ENCODE measurements at regions of chr6 and their contacts with region 1.

Region 1: DNA sequence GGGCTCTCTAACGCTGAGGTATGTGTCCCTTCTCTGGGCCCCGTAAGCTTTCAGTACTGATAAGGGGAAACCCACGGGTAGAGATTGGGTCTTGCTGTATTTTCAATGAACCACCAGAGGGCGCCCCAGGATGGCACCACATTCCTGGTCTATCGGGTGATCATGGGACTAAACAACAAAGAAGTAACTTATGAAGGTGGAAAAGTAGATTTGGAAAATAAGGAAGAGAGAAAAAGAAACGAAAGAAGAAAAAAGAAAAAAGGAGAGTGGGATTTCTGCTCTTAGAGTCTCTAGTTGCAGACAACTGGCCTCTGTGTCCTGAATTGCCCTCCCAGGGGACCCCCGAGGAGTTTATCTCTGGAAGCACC is 93.8 kb downstream of the GMPR start:
- DNase-seq: peak; percentile 75
- H3K4me3 ChIP-seq: no peak overlapping the region
- H3K27ac ChIP-seq: peak overlapping the region; percentile 4
- H3K4me1 ChIP-seq: peaks cover 62% of the 10 kb centered on the region
- H3K27me3 ChIP-seq: no peaks in the 10 kb centered on the region
- CTCF ChIP-seq: peak; percentile 91

Region 2: GRCh38 chr6:16409531-16410441 is 77.6 kb after region 1 on chr6:
- intact Hi-C with region 1: loop called (anchors 5 kb)
- DNase-seq: peak; percentile 57
- H3K4me3 ChIP-seq: no peak overlapping the region
- H3K27ac ChIP-seq: no peak overlapping the region
- H3K4me1 ChIP-seq: peaks cover 42% of the 10 kb centered on the region
- H3K27me3 ChIP-seq: no peaks in the 10 kb centered on the region
- CTCF ChIP-seq: peak; percentile 86